Psoas muscle (tissue), 8 donors: ENCODE measurements at regions of chr10 and their contacts with region 1.

Region 1: GRCh38 chr10:76149182-76149581 is 717.8 kb downstream of the LRMDA start:
- DNase-seq: no peak
- ATAC-seq: no peak
- H3K4me3 ChIP-seq: no peak overlapping the region
- H3K27ac ChIP-seq: no peak overlapping the region
- H3K4me1 ChIP-seq: no peaks in the 10 kb centered on the region
- H3K27me3 ChIP-seq: peaks cover 0 to 7% (median 2%) of the 10 kb centered on the region in 3 donors
- CTCF ChIP-seq: no peak

Region 2: DNA sequence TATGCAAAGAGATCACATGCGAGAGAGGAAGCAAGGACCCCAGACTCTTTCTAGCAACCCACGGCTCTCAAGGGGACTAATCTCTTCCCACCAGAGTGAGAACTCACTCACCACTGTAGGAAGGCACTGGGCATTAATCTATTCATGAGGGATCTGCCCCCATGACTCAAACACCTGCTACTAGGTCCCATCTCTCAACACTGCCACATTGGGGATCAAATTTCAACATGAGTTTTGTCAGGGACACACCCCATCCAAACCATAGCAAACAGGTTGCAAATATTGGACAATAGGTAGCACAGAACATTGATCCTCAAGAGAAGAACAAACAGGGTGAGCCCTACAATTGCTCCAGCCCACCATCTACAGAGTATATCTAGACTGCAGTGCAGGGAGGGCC is 22.8 kb after region 1 on chr10:
- intact Hi-C with region 1: no loop called
- DNase-seq: no peak
- ATAC-seq: no peak
- H3K4me3 ChIP-seq: no peak overlapping the region
- H3K27ac ChIP-seq: no peak overlapping the region
- H3K4me1 ChIP-seq: no peaks in the 10 kb centered on the region
- H3K27me3 ChIP-seq: no peaks in the 10 kb centered on the region
- CTCF ChIP-seq: no peak

Region 3: DNA sequence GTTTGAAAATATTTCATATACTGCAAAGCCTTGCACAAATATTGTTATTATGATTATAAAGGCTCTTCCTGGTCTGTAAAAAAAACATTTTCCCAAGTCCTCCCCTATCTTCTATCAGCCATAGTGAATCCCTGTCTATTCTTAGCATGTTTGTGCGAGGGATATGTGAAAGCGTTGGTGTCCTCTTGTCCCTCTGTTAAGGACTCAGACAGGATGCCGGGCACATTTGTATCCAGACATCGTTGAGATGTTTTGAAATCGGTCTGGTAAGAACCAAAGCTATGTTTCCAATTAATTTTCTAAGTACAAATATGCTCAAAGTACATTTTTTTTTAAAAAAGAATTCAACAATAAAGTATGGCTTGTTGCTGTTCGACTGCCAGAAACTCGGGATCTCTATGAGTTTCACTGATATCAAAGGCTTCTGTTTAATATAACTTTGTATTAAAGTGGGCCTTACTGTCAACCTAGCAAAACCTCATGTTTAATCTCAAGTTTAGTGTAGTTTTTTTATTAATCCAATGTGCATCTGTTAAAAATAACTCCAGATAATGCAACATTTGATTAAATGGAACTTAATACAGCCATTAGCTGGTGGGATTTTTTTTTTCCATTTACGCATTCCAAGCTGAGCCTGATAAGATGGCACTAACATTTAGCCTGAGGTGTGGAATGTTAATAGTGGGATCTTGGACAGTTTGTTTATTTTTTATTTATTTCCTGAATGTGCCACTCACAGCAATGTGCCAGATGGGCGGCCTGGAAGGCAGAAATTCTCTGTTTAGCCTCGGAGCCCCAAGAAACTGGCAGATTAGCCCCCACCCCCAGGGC is 36.5 kb after region 1 on chr10:
- intact Hi-C with region 1: loop called in 1 of 2 experiments (anchors 1 kb)
- DNase-seq: no peak
- ATAC-seq: no peak
- H3K4me3 ChIP-seq: no peak overlapping the region
- H3K27ac ChIP-seq: no peak overlapping the region
- H3K4me1 ChIP-seq: no peaks in the 10 kb centered on the region
- H3K27me3 ChIP-seq: no peaks in the 10 kb centered on the region
- CTCF ChIP-seq: no peak